ENCODE measurements at regions of chr4 and their contacts with region 1.

Region 1: DNA sequence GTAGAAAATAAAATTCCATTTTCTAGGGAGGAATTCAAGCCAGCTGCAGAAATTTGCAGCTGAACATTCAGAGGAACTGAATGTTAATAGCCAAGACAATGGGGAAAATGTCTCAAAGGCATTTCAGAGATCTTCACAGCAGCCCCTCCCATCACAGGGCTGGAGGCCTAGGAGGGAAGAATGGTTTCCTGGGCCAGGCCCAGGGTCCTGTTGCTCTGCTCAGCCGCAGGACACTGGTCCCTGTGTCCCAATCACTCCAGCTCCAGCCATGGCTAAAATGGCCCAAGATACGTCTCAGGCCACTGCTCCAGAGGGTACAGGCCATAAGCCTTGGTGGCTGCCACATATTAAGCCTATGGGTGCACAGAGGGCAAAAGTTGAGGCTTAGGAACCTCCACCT is 20.4 kb downstream of the FAM13A start:
- DNase-seq: no peak
- H3K4me3 ChIP-seq: no peak overlapping the region
- H3K27ac ChIP-seq: no peak overlapping the region
- H3K4me1 ChIP-seq: peaks cover 1% of the 10 kb centered on the region
- H3K27me3 ChIP-seq: no peaks in the 10 kb centered on the region
- CTCF ChIP-seq: no peak
- EP300 ChIP-seq: no peak
- POLR2A ChIP-seq: no peak

Region 2: DNA sequence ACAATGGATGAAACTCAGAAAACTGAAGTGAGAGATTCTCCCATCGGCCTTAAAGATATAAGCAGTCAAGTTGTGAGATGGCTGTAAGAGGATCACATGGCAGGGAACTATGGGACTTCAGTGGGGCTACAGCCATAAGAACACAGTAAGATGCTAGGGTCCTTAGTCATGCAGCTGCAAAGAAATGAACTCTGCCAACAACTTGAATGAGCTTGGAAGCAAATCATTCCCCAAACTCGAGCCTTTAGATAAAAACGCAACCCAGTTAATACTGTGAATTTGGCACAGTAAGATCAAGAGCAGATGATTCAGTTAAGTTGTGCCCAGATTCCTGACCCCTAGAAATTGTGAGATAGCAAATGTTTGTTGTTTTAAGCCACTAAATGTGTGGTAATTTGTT is 96.8 kb before region 1 on chr4:
- intact Hi-C with region 1: no loop called
- DNase-seq: no peak
- H3K4me3 ChIP-seq: no peak overlapping the region
- H3K27ac ChIP-seq: no peak overlapping the region
- H3K4me1 ChIP-seq: peaks cover 3% of the 10 kb centered on the region
- H3K27me3 ChIP-seq: no peaks in the 10 kb centered on the region
- CTCF ChIP-seq: no peak
- EP300 ChIP-seq: no peak
- POLR2A ChIP-seq: no peak

Region 3: DNA sequence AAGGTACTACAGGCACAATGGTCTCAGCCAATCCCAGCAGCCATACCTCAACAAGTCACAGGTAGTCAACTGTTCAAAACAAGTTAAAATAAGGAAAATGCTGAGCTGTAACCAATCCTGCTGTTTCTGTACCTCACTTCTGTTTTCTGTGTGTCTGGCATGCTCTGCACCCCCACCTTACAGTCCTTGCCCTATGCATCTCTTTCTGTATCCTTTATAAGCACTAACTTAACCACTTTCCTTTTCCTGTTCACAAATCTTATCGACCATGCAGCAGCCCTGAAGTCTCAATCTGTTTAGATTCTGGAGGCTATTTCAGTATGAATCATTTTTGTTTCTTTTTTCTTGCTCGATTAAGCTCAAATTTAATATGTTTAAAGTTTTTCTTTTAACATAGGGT is 32.9 kb after region 1 on chr4:
- intact Hi-C with region 1: loop called in 1 of 4 experiments (anchors 2 kb)
- DNase-seq: no peak
- H3K4me3 ChIP-seq: no peak overlapping the region
- H3K27ac ChIP-seq: no peak overlapping the region
- H3K4me1 ChIP-seq: no peaks in the 10 kb centered on the region
- H3K27me3 ChIP-seq: no peaks in the 10 kb centered on the region
- CTCF ChIP-seq: no peak
- EP300 ChIP-seq: no peak
- POLR2A ChIP-seq: no peak

Measured in ovary (tissue), 10 donors.